Activated CD4-positive, alpha-beta memory T cell treated with anti-CD3 and anti-CD28 coated beads for 36 hours (primary cell): ENCODE measurements at regions of chr9 and their contacts with region 1.

Region 1: GRCh38 chr9:125241000-125241862 is at the start of gene HSPA5:
- DNase-seq: peak; percentile 100
- H3K4me3 Mint-ChIP-seq: peak within 1 kb of the TSS; percentile 94
- H3K27ac Mint-ChIP-seq: peak within 1 kb of the TSS; percentile 98
- H3K4me1 Mint-ChIP-seq: peaks cover 46% of the 10 kb centered on the region
- H3K27me3 Mint-ChIP-seq: peaks cover 2% of the 10 kb centered on the region
- total RNA-seq, gene HSPA5: 169 to 170 TPM

Region 2: GRCh38 chr9:124861342-124862229 is 379.6 kb before region 1 on chr9 and contains the starts of genes ARPC5L and RPL35:
- CTCF ChIA-PET with region 1: no interaction called
- POLR2A ChIA-PET with region 1: interaction called, 17 read pairs
- intact Hi-C with region 1: no loop called
- DNase-seq: peak; percentile 96
- H3K4me3 Mint-ChIP-seq: peak within 1 kb of the TSS; percentile 88
- H3K27ac Mint-ChIP-seq: peak within 1 kb of the TSS; percentile 94
- H3K4me1 Mint-ChIP-seq: peaks cover 42% of the 10 kb centered on the region
- H3K27me3 Mint-ChIP-seq: no peaks in the 10 kb centered on the region
- total RNA-seq, gene ARPC5L: 104 to 108 TPM
- total RNA-seq, gene RPL35: 2,083 to 2,096 TPM

Region 3: GRCh38 chr9:124940693-124941453 is 300.4 kb before region 1 on chr9 and contains the start of gene GOLGA1:
- CTCF ChIA-PET with region 1: no interaction called
- POLR2A ChIA-PET with region 1: interaction called, 10 read pairs
- intact Hi-C with region 1: loop called (anchors 2 kb)
- DNase-seq: peak; percentile 95
- H3K4me3 Mint-ChIP-seq: peak within 1 kb of the TSS; percentile 79
- H3K27ac Mint-ChIP-seq: peak within 1 kb of the TSS; percentile 89
- H3K4me1 Mint-ChIP-seq: peaks cover 24% of the 10 kb centered on the region
- H3K27me3 Mint-ChIP-seq: no peaks in the 10 kb centered on the region
- total RNA-seq, gene GOLGA1: 14.1 to 15.3 TPM

Region 4: GRCh38 chr9:125189361-125190289 is 51.6 kb before region 1 on chr9 and contains the start of gene PPP6C:
- CTCF ChIA-PET with region 1: interaction called, 4 read pairs
- POLR2A ChIA-PET with region 1: interaction called, 8 read pairs
- intact Hi-C with region 1: loop called (anchors 1 kb)
- DNase-seq: peak; percentile 99
- H3K4me3 Mint-ChIP-seq: peak within 1 kb of the TSS; percentile 97
- H3K27ac Mint-ChIP-seq: peak within 1 kb of the TSS; percentile 95
- H3K4me1 Mint-ChIP-seq: peaks cover 54% of the 10 kb centered on the region
- H3K27me3 Mint-ChIP-seq: no peaks in the 10 kb centered on the region
- total RNA-seq, gene PPP6C: 46.7 to 47.4 TPM

Region 5: GRCh38 chr9:125261501-125262293 is 20.5 kb after region 1 on chr9 and contains the start of gene GAPVD1:
- CTCF ChIA-PET with region 1: interaction called, 17 read pairs
- POLR2A ChIA-PET with region 1: interaction called, 66 read pairs
- intact Hi-C with region 1: loop called (anchors 1 kb)
- DNase-seq: peak; percentile 94
- H3K4me3 Mint-ChIP-seq: peak within 1 kb of the TSS; percentile 99
- H3K27ac Mint-ChIP-seq: peak within 1 kb of the TSS; percentile 93
- H3K4me1 Mint-ChIP-seq: peaks cover 45% of the 10 kb centered on the region
- H3K27me3 Mint-ChIP-seq: peaks cover 2% of the 10 kb centered on the region
- total RNA-seq, gene GAPVD1: 42.2 to 46.8 TPM